ENCODE measurements at regions of chr3 and their contacts with region 1.

Region 1: DNA sequence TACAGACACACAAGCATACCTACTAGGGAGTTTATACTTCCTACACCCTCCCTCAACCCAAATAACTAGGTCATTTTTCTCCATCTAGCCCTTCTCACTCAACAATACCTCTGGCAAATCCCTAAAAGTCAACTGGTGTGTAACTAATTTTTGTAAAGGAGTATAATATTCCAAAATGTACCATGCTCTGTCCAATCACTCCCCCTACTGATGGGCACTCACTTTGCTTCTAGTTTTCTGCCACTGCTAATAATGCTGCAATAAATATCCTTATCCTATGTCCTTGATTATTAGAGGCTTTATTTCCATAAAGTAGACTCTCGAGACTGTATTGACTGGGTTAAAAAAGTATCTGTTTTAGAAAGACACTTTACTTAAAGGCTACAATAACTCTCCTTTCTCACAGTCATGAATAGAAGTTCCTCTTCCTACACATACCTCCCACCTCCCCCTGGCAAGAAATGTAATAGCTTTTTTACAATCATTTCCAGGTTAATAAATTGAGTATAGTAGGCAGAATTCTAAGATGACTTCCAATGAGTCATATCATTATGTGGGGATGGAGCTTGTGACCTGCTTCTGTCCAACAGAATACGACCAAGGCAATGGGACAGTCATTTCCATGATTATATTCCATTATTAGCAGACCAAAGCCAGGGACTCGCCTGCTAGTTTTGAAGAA is 30.0 kb downstream of the SHQ1 start:
- DNase-seq: peak; percentile 42 to 51 (median 47)
- H3K4me3 ChIP-seq: no peak overlapping the region
- H3K27ac ChIP-seq: no peak overlapping the region
- H3K4me1 ChIP-seq: peaks cover 27 to 53% (median 45%) of the 10 kb centered on the region in 4 experiments
- H3K27me3 ChIP-seq: no peaks in the 10 kb centered on the region

Region 2: DNA sequence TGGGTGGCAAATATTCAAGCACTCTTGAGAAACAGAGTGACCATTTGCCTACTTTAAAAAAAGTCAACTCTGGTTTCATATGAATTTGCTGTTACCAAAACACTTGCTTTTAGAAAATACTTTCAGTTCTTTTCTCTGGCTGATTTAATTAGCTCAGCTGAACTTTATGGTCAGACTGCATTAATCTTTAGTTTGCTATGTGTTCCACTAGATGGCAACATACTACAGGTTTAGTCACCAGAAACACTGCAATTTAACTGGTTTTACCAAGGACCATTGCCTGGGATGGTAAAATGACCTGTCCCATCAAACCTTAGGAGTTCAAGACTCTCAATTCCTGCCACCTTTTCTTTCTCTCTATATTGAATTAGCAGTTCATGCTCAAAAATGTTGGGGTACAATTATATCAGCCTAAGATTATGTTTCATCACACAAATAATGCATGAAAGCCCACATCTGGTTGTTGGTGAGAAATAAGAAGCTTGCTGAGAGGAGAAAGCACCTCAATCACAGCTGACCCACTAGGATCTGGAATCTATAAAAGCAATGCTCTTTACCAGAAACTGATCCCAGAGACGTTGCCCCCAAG is 1107.2 kb before region 1 on chr3:
- CTCF ChIA-PET with region 1: interaction called, 12 read pairs
- POLR2A ChIA-PET with region 1: no interaction called
- DNase-seq: peak; percentile 63 to 78 (median 76)
- H3K4me3 ChIP-seq: no peak overlapping the region
- H3K27ac ChIP-seq: no peak overlapping the region
- H3K4me1 ChIP-seq: peaks cover 3 to 18% (median 13%) of the 10 kb centered on the region in 4 experiments
- H3K27me3 ChIP-seq: no peaks in the 10 kb centered on the region

Region 3: GRCh38 chr3:71875461-71875947 is 942.7 kb before region 1 on chr3:
- CTCF ChIA-PET with region 1: interaction called, 23 read pairs
- POLR2A ChIA-PET with region 1: no interaction called
- DNase-seq: peak; percentile 84 to 93 (median 93)
- H3K4me3 ChIP-seq: no peak overlapping the region
- H3K27ac ChIP-seq: no peak overlapping the region
- H3K4me1 ChIP-seq: peaks cover 0 to 19% (median 11%) of the 10 kb centered on the region in 4 experiments
- H3K27me3 ChIP-seq: peaks cover 0 to 3% (median 0%) of the 10 kb centered on the region in 5 experiments

Region 4: DNA sequence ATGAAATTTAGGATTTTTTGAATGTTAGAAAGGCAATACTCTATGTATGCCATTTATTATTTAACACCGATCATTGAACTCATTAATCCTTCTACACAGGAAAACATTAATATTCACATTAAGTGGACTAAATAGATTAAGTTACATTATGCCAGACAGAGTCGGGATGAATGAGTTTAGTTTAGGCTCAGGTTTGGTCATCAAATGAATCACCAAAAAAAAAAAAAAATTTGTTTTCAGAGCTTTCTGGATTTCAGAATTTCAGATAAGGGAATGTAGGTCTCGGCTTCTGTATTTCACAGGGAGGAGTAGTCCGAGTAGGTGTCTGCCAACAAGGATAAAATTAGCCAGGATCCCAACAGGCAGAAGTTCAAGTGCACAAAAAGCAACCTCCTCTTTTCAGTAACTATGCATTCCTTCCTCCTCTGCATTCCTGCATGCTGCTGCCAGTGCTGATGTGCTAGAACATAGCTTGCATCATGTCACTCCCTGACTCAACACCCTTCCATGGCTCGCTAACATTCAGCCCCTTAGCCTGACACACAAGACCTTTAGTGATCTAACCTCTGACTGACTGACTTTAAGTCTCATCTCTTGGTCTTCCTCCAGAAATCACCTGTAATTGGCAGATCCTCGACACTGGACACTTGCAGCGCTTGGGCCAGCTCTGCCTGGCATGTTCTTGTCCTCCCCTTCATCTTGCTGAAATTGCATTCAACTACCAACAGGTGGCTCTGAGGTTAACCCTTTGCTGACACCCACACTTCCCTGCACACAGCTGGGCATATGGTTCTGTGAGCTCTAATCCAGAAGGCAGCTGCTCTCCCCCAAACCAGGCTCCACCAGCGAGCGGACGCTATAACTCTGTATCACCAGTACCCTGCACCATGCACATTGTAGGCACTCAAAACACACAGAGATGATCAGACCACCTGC is 887.9 kb before region 1 on chr3:
- CTCF ChIA-PET with region 1: interaction called, 11 read pairs
- POLR2A ChIA-PET with region 1: no interaction called
- DNase-seq: peak; percentile 26 to 57 (median 50)
- H3K4me3 ChIP-seq: no peak overlapping the region
- H3K27ac ChIP-seq: no peak overlapping the region
- H3K4me1 ChIP-seq: peaks cover 0 to 19% (median 3%) of the 10 kb centered on the region in 4 experiments
- H3K27me3 ChIP-seq: no peaks in the 10 kb centered on the region

Region 5: DNA sequence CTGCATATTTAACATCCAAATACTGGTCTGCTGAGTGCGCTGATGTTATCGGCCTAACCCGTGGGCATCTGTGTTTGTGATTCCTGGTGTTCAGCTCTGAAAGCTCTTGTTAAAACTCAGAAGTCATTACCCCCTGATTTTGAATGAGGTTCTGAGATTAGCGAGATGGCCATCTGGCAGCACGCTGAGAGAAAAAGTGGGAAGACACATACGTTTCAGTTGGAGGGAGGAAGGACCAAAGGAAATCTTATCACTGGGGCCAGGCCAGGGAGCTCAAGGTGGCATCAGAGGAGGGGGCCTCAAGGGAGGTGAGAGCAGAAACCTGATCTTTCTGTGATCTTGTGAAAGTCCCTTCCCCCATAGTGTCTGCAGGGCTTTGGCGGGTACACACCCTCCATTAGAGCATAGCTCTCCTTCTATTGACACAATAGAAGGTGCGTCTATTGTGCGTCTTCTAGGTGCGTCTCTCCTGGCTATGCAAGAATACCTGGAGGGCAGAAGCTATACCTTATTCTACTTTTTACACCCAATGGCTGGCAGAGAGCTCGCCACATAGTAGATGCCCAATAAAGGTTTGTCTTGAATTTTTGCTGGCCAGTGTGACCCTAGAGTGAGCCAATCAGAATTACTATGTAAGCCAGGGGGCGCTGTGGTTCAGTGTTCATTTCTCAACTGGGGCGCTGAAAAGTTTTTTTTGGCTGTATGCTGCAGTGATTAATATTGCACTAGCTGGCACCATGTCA is 152.4 kb before region 1 on chr3:
- CTCF ChIA-PET with region 1: interaction called, 81 read pairs
- POLR2A ChIA-PET with region 1: no interaction called
- DNase-seq: peak; percentile 45 to 75 (median 66)
- H3K4me3 ChIP-seq: no peak overlapping the region
- H3K27ac ChIP-seq: no peak overlapping the region
- H3K4me1 ChIP-seq: no peaks in the 10 kb centered on the region
- H3K27me3 ChIP-seq: no peaks in the 10 kb centered on the region

Region 6: GRCh38 chr3:72830452-72831217 is 12.4 kb after region 1 on chr3:
- CTCF ChIA-PET with region 1: interaction called, 34 read pairs
- POLR2A ChIA-PET with region 1: no interaction called
- DNase-seq: no peak
- H3K4me3 ChIP-seq: no peak overlapping the region
- H3K27ac ChIP-seq: no peak overlapping the region
- H3K4me1 ChIP-seq: no peaks in the 10 kb centered on the region
- H3K27me3 ChIP-seq: no peaks in the 10 kb centered on the region

Region 7: DNA sequence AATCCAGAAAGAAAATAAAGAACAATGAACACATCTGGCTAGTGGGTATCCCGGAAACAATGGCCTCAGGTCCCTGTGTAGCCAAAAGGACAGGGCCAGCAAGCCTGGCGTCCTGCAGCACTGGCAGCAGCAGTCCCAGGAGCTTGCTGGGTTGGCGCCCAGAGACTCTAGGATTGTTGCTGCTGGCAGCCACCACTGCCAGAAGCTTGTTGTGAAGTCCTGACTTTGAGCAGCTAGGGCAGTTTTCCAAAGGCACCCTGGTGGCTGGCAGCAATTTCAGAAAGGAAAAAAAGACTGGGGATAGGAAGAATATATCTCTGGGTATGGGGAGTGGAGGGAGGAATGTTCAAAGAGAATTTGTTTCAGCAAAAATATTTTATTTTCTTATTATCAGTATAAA is 18.7 kb after region 1 on chr3:
- CTCF ChIA-PET with region 1: interaction called, 34 read pairs
- POLR2A ChIA-PET with region 1: no interaction called
- DNase-seq: no peak
- H3K4me3 ChIP-seq: no peak overlapping the region
- H3K27ac ChIP-seq: no peak overlapping the region
- H3K4me1 ChIP-seq: no peaks in the 10 kb centered on the region
- H3K27me3 ChIP-seq: no peaks in the 10 kb centered on the region

Region 8: GRCh38 chr3:72855001-72855400 is 36.8 kb after region 1 on chr3:
- CTCF ChIA-PET with region 1: no interaction called
- POLR2A ChIA-PET with region 1: no interaction called
- DNase-seq: no peak
- H3K4me3 ChIP-seq: no peak overlapping the region
- H3K27ac ChIP-seq: no peak overlapping the region
- H3K4me1 ChIP-seq: peaks cover 2 to 13% (median 5%) of the 10 kb centered on the region in 4 experiments
- H3K27me3 ChIP-seq: no peaks in the 10 kb centered on the region

Region 9: DNA sequence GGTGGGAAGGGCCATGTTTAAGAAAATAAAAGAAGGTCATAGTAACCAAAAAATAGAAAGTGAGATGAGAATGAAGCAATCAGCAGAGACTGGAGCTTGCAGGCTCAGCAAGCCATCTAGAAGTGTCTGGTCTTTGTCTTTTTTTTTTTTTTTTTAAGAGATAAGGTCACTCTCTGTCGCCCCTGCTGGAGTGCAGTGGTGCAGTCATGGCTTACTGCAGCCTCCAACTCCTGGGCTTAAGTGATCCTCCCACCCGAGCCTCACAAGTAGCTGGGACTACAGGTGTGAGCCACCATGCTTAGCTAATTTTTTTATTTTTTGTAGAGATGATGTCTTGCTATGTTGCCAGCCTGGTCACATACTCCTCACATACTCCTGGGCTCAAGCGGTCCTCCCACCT is 105.8 kb after region 1 on chr3:
- CTCF ChIA-PET with region 1: no interaction called
- POLR2A ChIA-PET with region 1: no interaction called
- DNase-seq: peak in 2 of 3 donors; percentile 6 to 19
- H3K4me3 ChIP-seq: no peak overlapping the region
- H3K27ac ChIP-seq: no peak overlapping the region
- H3K4me1 ChIP-seq: no peaks in the 10 kb centered on the region
- H3K27me3 ChIP-seq: peaks cover 0 to 4% (median 0%) of the 10 kb centered on the region in 5 experiments

Region 10: DNA sequence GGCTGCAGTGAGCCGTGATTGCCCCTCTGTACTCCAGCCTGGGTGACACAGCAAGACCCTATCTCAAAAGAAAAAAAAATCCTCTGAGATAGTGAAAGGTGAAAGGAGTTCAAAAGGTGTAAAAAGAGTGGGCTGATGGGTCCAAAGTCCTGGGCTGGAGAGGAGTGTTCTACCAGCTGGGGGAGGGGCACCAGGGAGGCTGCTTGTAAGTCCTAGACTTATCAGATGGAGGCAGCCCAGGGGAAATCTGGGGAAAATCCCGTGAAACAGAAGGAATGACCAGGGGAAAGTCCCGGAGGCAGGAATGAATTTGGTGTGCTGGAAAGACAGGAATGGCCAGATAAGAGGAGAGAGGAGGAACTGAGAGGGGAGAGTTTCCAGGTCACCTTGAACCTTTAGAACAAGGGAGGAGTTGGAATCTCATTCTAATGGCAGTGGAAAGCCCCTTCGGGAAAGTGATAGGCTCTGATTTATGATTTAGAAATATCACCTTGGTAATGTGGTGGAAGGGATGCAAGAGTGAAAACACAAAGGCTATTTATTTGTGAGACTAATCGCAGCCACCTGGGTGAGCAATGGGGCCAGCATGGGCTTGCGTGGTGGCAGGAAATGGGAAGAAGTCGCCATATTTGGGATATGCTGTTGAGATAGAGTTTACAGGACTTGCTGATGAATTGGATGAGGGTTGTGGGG is 154.9 kb after region 1 on chr3:
- CTCF ChIA-PET with region 1: no interaction called
- POLR2A ChIA-PET with region 1: no interaction called
- DNase-seq: no peak
- H3K4me3 ChIP-seq: no peak overlapping the region
- H3K27ac ChIP-seq: no peak overlapping the region
- H3K4me1 ChIP-seq: no peaks in the 10 kb centered on the region
- H3K27me3 ChIP-seq: no peaks in the 10 kb centered on the region